Ovary (tissue), 10 donors: ENCODE measurements at regions of chr2 and their contacts with region 1.

Region 1: GRCh38 chr2:67782443-67782842 is 280.4 kb downstream of the C1D start:
- DNase-seq: peak in 1 of 5 donors; percentile 9
- H3K4me3 ChIP-seq: no peak overlapping the region
- H3K27ac ChIP-seq: no peak overlapping the region
- H3K4me1 ChIP-seq: no peaks in the 10 kb centered on the region
- H3K27me3 ChIP-seq: no peaks in the 10 kb centered on the region
- CTCF ChIP-seq: no peak
- EP300 ChIP-seq: no peak
- POLR2A ChIP-seq: no peak

Region 2: GRCh38 chr2:66633631-66634030 is 1148.8 kb before region 1 on chr2:
- intact Hi-C with region 1: loop called in 1 of 4 experiments (anchors 5 kb)
- DNase-seq: no peak
- H3K4me3 ChIP-seq: no peak overlapping the region
- H3K27ac ChIP-seq: no peak overlapping the region
- H3K4me1 ChIP-seq: no peaks in the 10 kb centered on the region
- H3K27me3 ChIP-seq: no peaks in the 10 kb centered on the region
- CTCF ChIP-seq: no peak
- EP300 ChIP-seq: no peak
- POLR2A ChIP-seq: no peak